Heart right ventricle (tissue), 16 donors: ENCODE measurements at regions of chr5 and their contacts with region 1.

Region 1: DNA sequence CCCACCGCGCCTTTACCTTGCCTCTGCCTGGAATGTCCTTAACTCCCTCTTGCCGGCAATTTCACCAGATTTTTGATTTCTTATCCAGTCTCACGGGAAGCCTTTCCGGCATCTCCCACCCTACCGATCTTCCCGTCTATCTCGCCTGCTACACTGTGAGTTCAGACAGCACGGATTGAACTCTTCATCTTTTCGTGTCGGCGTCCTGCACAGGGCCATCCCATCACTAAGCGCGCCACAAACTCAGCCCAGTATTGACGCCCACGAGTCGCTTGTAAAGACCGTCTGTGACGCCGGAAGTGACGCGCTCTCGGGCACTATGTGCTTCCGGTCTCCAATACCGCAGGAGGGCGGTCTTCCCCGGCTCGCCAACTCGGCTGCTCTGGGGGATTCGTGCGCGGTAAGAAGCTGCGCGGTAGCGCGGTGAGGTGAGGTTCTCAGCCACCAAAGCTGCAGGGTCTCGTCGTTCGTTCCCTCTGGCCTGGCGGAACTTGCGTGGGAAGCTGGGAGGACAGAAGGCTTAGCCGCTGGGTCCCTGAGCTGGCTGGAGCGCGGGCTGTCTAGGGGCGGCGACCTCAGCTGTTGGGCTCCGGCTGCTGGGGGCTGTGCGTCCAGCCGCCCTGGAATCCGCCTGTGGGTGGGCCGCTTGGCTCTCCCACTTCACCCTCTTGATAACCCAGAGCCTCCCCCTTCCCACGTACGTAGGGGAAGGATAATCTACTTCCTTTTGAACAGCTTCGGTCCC is at the start of gene ZCCHC9:
- DNase-seq: peak; percentile 93 to 94
- ATAC-seq: peak; percentile 97 to 99 (median 98)
- H3K4me3 ChIP-seq: peak within 1 kb of the TSS; percentile 73 to 96 (median 79)
- H3K27ac ChIP-seq: peak within 1 kb of the TSS; percentile 80 to 95 (median 92)
- H3K4me1 ChIP-seq: peaks cover 3 to 63% (median 35%) of the 10 kb centered on the region in 9 donors
- H3K27me3 ChIP-seq: no peaks in the 10 kb centered on the region
- CTCF ChIP-seq: peak in 7 of 9 donors; percentile 16 to 63 (median 33)
- total RNA-seq, gene ZCCHC9: 8.5 to 19.3 (median 11.0) TPM

Region 2: DNA sequence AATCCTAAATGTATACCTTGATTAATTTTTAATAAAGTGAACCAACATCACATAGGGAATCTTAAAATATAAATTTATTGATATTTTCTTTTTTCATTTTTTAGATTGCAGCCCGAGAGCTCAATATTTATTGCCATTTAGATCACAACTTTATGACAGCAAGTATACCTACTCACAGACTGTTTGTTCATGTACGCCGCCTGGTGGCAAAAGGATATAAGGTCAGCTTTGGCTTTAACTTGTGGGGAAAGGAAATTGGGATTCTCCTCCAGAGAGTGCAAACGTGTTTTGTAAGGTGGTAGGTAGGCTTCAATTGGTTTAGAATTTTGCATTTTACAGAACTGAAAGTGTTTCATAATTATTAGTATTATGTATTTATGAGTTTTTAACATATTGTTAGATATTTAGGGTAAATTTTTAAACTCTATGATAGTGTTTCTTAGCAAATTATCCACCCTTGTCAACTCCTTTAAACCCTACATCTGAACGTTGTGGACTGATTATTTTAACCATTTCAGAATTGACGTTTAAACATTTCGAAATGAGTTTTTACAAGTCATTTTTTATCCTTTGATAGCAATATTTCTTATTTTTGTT is 629.2 kb before region 1 on chr5:
- intact Hi-C with region 1: loop called in 1 of 10 experiments (anchors 10 kb)
- DNase-seq: peak; percentile 27 to 58
- ATAC-seq: peak in 6 of 8 donors; percentile 53 to 77 (median 68)
- H3K4me3 ChIP-seq: no peak overlapping the region
- H3K27ac ChIP-seq: no peak overlapping the region
- H3K4me1 ChIP-seq: peaks cover 0 to 7% (median 0%) of the 10 kb centered on the region in 9 donors
- H3K27me3 ChIP-seq: no peaks in the 10 kb centered on the region
- CTCF ChIP-seq: peak; percentile 68 to 89 (median 78)

Region 3: DNA sequence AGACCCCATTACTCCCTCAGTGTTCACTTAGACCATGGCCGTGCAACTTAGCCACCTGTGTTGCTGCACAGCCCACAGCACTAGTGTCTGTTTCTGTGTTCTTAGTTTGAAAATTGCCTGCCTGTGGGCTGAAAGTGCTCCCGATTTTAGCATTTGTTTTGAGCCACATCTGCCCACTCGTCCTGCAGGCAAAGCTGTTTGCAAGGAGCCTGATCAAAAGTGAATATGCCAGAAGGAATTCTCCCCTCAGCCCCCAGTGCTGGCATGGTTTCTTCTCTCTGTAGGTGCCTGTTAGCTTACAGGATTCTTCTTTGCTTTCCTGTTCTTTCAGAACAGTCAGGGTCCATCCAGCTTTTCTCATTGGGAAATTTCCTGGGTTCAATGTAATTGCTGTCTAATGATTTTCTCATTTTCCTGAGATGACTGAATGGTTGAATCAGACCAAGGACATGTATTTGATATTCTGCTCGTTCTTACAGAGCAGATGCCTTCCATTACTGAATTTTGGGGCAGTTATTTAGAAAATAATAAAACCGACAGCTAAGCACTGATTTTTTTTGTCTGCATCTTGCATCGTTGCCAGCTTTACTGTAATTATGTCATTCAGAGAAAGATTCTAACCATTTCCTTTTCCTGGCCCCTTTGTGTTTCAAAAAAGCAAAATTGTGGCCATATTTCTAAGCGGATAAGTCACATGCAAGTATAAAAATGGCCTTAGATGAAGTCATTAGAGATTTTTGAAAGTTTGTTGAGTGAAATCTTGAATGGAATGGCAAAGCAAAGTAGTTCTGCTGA is 179.4 kb before region 1 on chr5:
- intact Hi-C with region 1: no loop called
- DNase-seq: no peak
- ATAC-seq: no peak
- H3K4me3 ChIP-seq: no peak overlapping the region
- H3K27ac ChIP-seq: peak overlapping the region in 1 of 10 donors; percentile 38
- H3K4me1 ChIP-seq: peaks cover 0 to 9% (median 0%) of the 10 kb centered on the region in 9 donors
- H3K27me3 ChIP-seq: no peaks in the 10 kb centered on the region
- CTCF ChIP-seq: no peak

Region 4: GRCh38 chr5:81183811-81184748 is 117.4 kb before region 1 on chr5:
- intact Hi-C with region 1: no loop called
- DNase-seq: no peak
- ATAC-seq: no peak
- H3K4me3 ChIP-seq: no peak overlapping the region
- H3K27ac ChIP-seq: no peak overlapping the region
- H3K4me1 ChIP-seq: peaks cover 0 to 17% (median 3%) of the 10 kb centered on the region in 9 donors
- H3K27me3 ChIP-seq: no peaks in the 10 kb centered on the region
- CTCF ChIP-seq: no peak

Region 5: DNA sequence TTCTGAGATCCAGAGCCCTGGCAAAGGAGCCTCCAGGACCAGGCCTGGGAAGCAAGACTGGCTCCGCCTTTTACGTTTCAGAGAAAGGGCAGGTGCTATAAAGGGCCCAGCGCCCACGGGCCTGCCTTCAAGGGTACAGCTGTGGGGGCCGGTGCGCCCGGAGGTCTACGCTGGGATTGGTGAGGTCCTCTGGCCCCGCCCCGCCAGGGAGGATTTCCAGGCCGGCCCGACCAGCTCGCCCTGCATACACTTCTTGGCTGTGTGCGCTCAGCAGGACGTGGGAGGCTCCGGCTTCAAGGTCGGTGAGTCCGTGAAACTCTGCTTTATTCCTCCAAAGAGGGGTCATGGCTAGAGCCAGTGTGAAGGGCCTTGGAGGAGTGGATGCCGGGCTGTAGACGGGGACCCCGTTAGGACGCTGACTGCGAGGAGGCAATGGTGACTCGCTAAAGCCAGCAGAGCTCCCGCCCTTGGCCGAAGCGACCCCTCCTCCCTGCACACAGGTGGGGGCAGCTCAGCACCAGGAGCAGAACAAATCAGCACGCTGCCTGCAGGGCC is 68.3 kb before region 1 on chr5 and contains the start of gene CKMT2:
- intact Hi-C with region 1: loop called in 1 of 10 experiments (anchors 2 kb)
- DNase-seq: peak; percentile 88
- ATAC-seq: peak; percentile 81 to 90 (median 86)
- H3K4me3 ChIP-seq: peak within 1 kb of the TSS; percentile 16 to 66 (median 52)
- H3K27ac ChIP-seq: peak within 1 kb of the TSS; percentile 82 to 98 (median 94)
- H3K4me1 ChIP-seq: peaks cover 7 to 65% (median 31%) of the 10 kb centered on the region in 9 donors
- H3K27me3 ChIP-seq: no peaks in the 10 kb centered on the region
- CTCF ChIP-seq: no peak
- total RNA-seq, gene CKMT2: 1,320 to 2,236 (median 1,671) TPM

Region 6: DNA sequence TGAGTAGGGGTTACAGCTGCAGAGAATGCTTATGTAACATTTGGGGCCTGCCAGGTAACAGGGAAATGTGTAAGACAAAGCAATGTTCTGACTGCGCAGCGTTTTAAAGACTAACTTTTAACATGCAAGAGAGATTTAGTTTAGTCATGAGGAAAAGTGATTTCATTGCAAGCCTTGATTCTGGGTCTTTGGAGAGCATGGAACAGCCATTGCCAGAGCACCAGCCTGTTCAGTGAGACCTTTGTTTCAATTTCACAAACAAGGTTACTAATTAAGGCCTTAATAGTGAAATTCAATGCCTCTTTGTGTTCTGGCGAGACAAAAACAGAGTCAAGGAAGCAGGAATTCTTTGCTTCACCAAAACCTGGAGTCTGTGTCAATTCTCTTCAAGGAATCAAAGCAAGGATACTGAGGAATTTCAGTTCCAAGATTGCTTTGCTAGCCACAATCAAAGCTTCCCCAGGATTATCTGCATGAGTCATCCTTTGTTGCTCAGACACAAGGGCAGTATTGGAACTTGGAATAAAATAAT is 53.9 kb before region 1 on chr5:
- intact Hi-C with region 1: loop called in 1 of 10 experiments (anchors 5 kb)
- DNase-seq: no peak
- ATAC-seq: no peak
- H3K4me3 ChIP-seq: no peak overlapping the region
- H3K27ac ChIP-seq: peak overlapping the region in 6 of 10 donors; percentile 2 to 64 (median 32)
- H3K4me1 ChIP-seq: peaks cover 23 to 98% (median 81%) of the 10 kb centered on the region in 9 donors
- H3K27me3 ChIP-seq: no peaks in the 10 kb centered on the region
- CTCF ChIP-seq: no peak

Region 7: DNA sequence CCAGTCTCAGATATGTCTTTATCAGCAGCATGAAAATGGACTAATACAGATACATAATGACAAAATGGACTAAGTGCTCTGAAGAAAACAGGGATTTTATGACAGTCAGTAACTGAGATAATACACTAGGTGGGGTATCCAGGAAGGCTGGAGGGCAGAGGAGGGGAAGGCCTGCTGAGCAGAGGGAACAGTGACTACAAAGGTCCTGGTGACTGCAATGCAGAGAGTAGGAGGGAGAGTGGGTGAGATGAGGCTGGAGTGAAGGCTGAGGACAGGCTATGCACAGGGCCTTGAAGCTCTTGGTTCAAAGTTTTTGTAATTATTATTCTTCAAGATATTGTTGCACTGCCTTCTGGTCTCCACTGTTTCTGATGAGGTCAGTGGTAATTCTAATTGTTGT is 87.6 kb after region 1 on chr5:
- intact Hi-C with region 1: no loop called
- DNase-seq: no peak
- ATAC-seq: no peak
- H3K4me3 ChIP-seq: no peak overlapping the region
- H3K27ac ChIP-seq: no peak overlapping the region
- H3K4me1 ChIP-seq: peaks cover 0 to 9% (median 0%) of the 10 kb centered on the region in 9 donors
- H3K27me3 ChIP-seq: peaks cover 0 to 57% (median 34%) of the 10 kb centered on the region in 7 donors
- CTCF ChIP-seq: no peak

Region 8: GRCh38 chr5:81486711-81487110 is 185.3 kb after region 1 on chr5:
- intact Hi-C with region 1: no loop called
- DNase-seq: no peak
- ATAC-seq: no peak
- H3K4me3 ChIP-seq: no peak overlapping the region
- H3K27ac ChIP-seq: no peak overlapping the region
- H3K4me1 ChIP-seq: peaks cover 0 to 6% (median 0%) of the 10 kb centered on the region in 9 donors
- H3K27me3 ChIP-seq: no peaks in the 10 kb centered on the region
- CTCF ChIP-seq: no peak